B cell (primary cell): ENCODE measurements at regions of chr2 and their contacts with region 1.

Region 1: DNA sequence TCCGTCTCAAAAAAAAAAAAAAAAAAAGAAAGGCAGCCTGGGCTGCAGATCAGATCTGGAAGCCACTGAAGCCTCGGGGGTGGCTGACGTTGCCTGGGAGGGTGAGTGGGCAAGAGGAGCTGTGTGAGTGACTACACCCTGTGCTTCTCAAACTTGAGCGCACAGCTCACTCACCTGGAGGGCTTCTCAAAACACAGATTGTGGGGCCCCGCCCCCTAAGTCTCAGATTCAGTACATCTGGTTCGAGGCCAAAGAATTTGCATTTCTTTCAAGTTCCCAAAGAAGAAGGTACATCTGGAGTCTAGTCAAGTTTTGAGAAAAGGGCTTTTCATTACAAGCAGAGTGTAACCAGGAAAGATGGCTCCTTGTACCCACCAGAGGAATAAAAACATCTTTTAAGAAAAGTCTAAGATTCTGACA is 97.7 kb upstream of the CAB39 start:
- DNase-seq: peak; percentile 84
- ATAC-seq: peak; percentile 85
- H3K4me3 ChIP-seq: peak overlapping the region in 2 of 5 experiments; percentile 12 to 18
- H3K4me3 Mint-ChIP-seq: peak overlapping the region; percentile 75
- H3K27ac ChIP-seq: peak overlapping the region; percentile 0 to 46
- H3K27ac Mint-ChIP-seq: peak overlapping the region; percentile 86
- H3K4me1 ChIP-seq: peaks cover 27 to 42% of the 10 kb centered on the region in 2 donors
- H3K4me1 Mint-ChIP-seq: peaks cover 42% of the 10 kb centered on the region
- H3K27me3 ChIP-seq: no peaks in the 10 kb centered on the region
- H3K27me3 Mint-ChIP-seq: no peaks in the 10 kb centered on the region
- CTCF ChIP-seq: no peak

Region 2: DNA sequence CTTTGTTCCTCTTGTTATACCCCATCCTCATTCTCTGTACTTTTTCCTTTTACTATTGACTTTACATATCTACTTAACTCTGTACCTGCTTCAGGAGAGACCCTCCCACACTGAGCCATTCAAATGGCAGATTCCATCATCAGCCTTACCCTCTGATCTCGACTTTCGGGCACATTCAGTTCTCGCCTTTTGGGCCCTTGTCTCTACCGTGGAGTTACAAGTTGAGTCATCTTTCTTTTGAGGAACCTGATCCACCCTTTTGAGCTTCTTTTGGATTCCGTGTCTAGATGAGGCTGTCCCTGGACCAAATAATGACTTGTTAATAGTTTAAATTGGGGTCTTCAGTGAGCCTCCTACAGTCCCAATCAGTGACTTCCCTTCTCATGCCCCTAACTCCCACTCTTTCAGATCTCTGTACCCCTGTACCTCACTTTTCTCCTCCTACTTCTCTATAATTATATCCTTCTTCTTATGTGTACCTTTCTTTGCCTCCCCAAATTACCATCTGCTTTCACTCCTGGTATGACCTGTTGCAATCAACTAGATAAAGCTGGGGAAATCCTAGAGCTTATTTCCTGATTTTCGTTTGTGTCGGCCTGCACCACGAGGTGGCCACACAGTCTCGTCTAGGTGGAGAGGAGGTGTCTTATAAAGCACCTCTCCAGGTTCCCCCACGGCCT is 412.4 kb before region 1 on chr2:
- CTCF ChIA-PET with region 1: interaction called, 66 read pairs
- POLR2A ChIA-PET with region 1: interaction called, 5 read pairs
- intact Hi-C with region 1: loop called (anchors 1 kb)
- DNase-seq: peak; percentile 79
- ATAC-seq: peak; percentile 61
- H3K4me3 ChIP-seq: no peak overlapping the region
- H3K4me3 Mint-ChIP-seq: peak overlapping the region; percentile 74
- H3K27ac ChIP-seq: peak overlapping the region; percentile 9 to 72
- H3K27ac Mint-ChIP-seq: peak overlapping the region; percentile 87
- H3K4me1 ChIP-seq: peaks cover 51 to 55% of the 10 kb centered on the region in 2 donors
- H3K4me1 Mint-ChIP-seq: peaks cover 39% of the 10 kb centered on the region
- H3K27me3 ChIP-seq: no peaks in the 10 kb centered on the region
- H3K27me3 Mint-ChIP-seq: no peaks in the 10 kb centered on the region
- CTCF ChIP-seq: peak; percentile 64

Region 3: DNA sequence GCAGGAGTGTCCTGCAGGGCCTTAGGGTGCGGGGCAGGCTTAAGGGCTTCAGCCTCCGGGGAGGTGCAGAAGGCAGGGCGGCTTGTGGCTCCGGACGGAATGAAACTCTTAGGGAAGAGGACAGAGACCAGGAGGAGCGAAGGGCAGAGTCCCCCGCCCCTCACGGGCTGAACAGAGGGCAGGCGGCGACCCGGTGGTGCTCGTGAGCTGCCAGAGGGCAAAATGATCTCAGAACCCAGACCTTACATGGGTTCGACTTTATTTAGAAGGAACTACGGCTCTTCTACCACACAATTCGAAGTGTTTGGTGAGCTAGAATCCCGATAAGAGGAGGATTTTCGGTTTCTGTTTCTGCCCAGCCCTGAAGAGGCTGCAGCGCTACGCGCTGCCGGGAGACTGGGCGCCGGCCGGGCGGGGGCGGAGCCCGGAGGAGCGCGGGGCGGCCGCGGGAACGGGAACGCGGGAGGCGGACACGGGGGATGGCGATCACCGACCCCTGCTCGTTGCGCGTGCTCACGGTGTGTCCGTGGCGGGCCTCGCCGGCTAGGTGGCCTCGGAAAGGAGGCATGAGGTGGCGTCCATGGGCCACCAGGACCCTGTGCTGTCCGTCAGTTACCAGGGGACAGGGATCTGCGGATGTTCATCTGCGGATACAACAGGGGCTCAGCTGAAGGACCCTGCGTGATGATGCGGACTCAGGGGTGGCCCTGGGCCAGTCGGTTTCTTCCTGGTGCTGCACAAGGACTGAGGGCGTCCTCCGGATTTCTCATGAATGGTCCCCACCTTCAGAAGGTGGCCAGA is 203.2 kb before region 1 on chr2:
- CTCF ChIA-PET with region 1: interaction called, 8 read pairs
- POLR2A ChIA-PET with region 1: interaction called, 3 read pairs
- intact Hi-C with region 1: loop called (anchors 1 kb)
- DNase-seq: peak; percentile 81
- ATAC-seq: peak; percentile 62
- H3K4me3 ChIP-seq: peak overlapping the region; percentile 69 to 92 (median 88)
- H3K4me3 Mint-ChIP-seq: peak overlapping the region; percentile 98
- H3K27ac ChIP-seq: peak overlapping the region; percentile 88 to 92
- H3K27ac Mint-ChIP-seq: peak overlapping the region; percentile 99
- H3K4me1 ChIP-seq: peaks cover 54 to 63% of the 10 kb centered on the region in 2 donors
- H3K4me1 Mint-ChIP-seq: peaks cover 72% of the 10 kb centered on the region
- H3K27me3 ChIP-seq: no peaks in the 10 kb centered on the region
- H3K27me3 Mint-ChIP-seq: no peaks in the 10 kb centered on the region
- CTCF ChIP-seq: no peak

Region 4: DNA sequence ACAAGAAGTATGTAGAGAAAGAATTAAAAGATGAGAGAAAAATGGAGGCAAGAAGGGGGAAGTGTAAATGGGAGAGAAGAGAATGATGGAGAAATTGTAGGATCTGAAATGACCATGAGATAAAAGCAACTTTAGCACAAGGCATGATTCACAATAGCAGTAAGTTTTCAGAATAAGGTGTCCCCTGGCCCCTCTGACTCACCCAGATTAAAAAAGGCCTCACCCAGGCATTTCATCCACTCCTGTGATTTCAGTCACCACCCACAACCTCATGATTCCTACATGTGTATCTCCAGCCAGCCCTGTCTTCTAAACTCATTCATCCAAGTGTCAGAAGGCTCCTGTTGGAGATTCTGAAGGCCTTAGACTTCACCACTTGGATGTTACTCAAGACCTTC is 142.3 kb before region 1 on chr2:
- CTCF ChIA-PET with region 1: interaction called, 10 read pairs
- POLR2A ChIA-PET with region 1: interaction called, 4 read pairs
- intact Hi-C with region 1: loop called (anchors 1 kb)
- DNase-seq: no peak
- ATAC-seq: peak; percentile 50
- H3K4me3 ChIP-seq: no peak overlapping the region
- H3K4me3 Mint-ChIP-seq: peak overlapping the region; percentile 24
- H3K27ac ChIP-seq: peak overlapping the region; percentile 46 to 81
- H3K27ac Mint-ChIP-seq: peak overlapping the region; percentile 86
- H3K4me1 ChIP-seq: peaks cover 46 to 50% of the 10 kb centered on the region in 2 donors
- H3K4me1 Mint-ChIP-seq: peaks cover 50% of the 10 kb centered on the region
- H3K27me3 ChIP-seq: no peaks in the 10 kb centered on the region
- H3K27me3 Mint-ChIP-seq: no peaks in the 10 kb centered on the region
- CTCF ChIP-seq: no peak

Region 5: GRCh38 chr2:230582851-230583283 is 32.1 kb before region 1 on chr2:
- CTCF ChIA-PET with region 1: interaction called, 3 read pairs
- POLR2A ChIA-PET with region 1: interaction called, 6 read pairs
- intact Hi-C with region 1: loop called (anchors 2 kb)
- DNase-seq: peak; percentile 71
- ATAC-seq: peak; percentile 80
- H3K4me3 ChIP-seq: peak overlapping the region in 2 of 5 experiments; percentile 2 to 43
- H3K4me3 Mint-ChIP-seq: peak overlapping the region; percentile 67
- H3K27ac ChIP-seq: peak overlapping the region; percentile 62 to 77
- H3K27ac Mint-ChIP-seq: peak overlapping the region; percentile 86
- H3K4me1 ChIP-seq: peaks cover 32 to 42% of the 10 kb centered on the region in 2 donors
- H3K4me1 Mint-ChIP-seq: peaks cover 46% of the 10 kb centered on the region
- H3K27me3 ChIP-seq: no peaks in the 10 kb centered on the region
- H3K27me3 Mint-ChIP-seq: no peaks in the 10 kb centered on the region
- CTCF ChIP-seq: no peak

Region 6: DNA sequence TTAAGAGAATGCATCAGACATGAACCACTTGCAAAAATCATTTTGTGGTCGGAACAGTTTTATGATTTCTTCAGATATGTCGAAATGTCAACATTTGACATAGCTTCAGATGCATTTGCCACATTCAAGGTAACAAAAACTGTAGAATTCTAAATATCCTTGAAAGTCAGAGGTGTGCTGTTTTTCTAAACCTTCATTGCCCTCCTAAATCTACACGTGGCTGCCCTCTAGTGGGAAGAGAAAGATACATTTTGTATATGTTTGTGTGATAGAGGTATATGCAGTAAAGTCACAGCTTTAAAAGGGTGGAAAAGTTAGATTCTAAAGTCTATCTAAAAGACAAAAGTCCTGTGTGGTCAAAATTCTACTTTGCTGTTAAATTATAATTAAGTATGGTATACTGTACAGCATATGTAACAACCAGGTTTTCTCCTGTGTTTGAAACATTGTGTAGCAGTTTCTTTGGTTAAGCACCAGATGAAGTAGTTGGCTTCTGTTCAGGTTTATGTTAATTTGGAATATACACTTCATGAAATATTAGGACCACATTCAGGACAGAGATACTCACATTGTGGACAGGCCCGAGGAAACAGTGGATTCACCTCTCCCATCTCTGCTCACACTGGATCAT is 184.0 kb after region 1 on chr2:
- CTCF ChIA-PET with region 1: interaction called, 16 read pairs
- POLR2A ChIA-PET with region 1: interaction called, 4 read pairs
- intact Hi-C with region 1: loop called (anchors 1 kb)
- DNase-seq: peak; percentile 61
- ATAC-seq: no peak
- H3K4me3 ChIP-seq: no peak overlapping the region
- H3K4me3 Mint-ChIP-seq: no peak overlapping the region
- H3K27ac ChIP-seq: no peak overlapping the region
- H3K27ac Mint-ChIP-seq: peak overlapping the region; percentile 44
- H3K4me1 ChIP-seq: peaks cover 26 to 29% of the 10 kb centered on the region in 2 donors
- H3K4me1 Mint-ChIP-seq: peaks cover 18% of the 10 kb centered on the region
- H3K27me3 ChIP-seq: no peaks in the 10 kb centered on the region
- H3K27me3 Mint-ChIP-seq: no peaks in the 10 kb centered on the region
- CTCF ChIP-seq: peak; percentile 80